ENCODE measurements at regions of chr3 and their contacts with region 1.

Region 1: GRCh38 chr3:73056014-73056844 is 5.2 kb upstream of the EBLN2 start:
- DNase-seq: no peak
- H3K4me3 Mint-ChIP-seq: no peak overlapping the region
- H3K27ac Mint-ChIP-seq: peak overlapping the region; percentile 68
- H3K4me1 Mint-ChIP-seq: peaks cover 8% of the 10 kb centered on the region
- H3K27me3 Mint-ChIP-seq: no peaks in the 10 kb centered on the region
- CTCF ChIP-seq: no peak

Region 2: GRCh38 chr3:72996473-72997333 is 59.5 kb before region 1 on chr3 and contains the start of gene PPP4R2:
- CTCF ChIA-PET with region 1: interaction called, 8 read pairs
- intact Hi-C with region 1: loop called (anchors 5 kb)
- DNase-seq: peak; percentile 91
- H3K4me3 Mint-ChIP-seq: peak within 1 kb of the TSS; percentile 96
- H3K27ac Mint-ChIP-seq: peak within 1 kb of the TSS; percentile 89
- H3K4me1 Mint-ChIP-seq: peaks cover 10% of the 10 kb centered on the region
- H3K27me3 Mint-ChIP-seq: no peaks in the 10 kb centered on the region
- CTCF ChIP-seq: no peak
- total RNA-seq, gene PPP4R2: 68.4 and 89.0 TPM in 2 replicates

Region 3: GRCh38 chr3:73024836-73025235 is 31.4 kb before region 1 on chr3:
- CTCF ChIA-PET with region 1: interaction called, 5 read pairs
- intact Hi-C with region 1: loop called (anchors 5 kb)
- DNase-seq: peak; percentile 35
- H3K4me3 Mint-ChIP-seq: no peak overlapping the region
- H3K27ac Mint-ChIP-seq: peak overlapping the region; percentile 79
- H3K4me1 Mint-ChIP-seq: peaks cover 40% of the 10 kb centered on the region
- H3K27me3 Mint-ChIP-seq: no peaks in the 10 kb centered on the region
- CTCF ChIP-seq: no peak

Region 4: GRCh38 chr3:73037369-73037699 is 18.9 kb before region 1 on chr3:
- CTCF ChIA-PET with region 1: interaction called, 3 read pairs
- intact Hi-C with region 1: loop called (anchors 2 kb)
- DNase-seq: no peak
- H3K4me3 Mint-ChIP-seq: no peak overlapping the region
- H3K27ac Mint-ChIP-seq: peak overlapping the region; percentile 56
- H3K4me1 Mint-ChIP-seq: peaks cover 45% of the 10 kb centered on the region
- H3K27me3 Mint-ChIP-seq: no peaks in the 10 kb centered on the region
- CTCF ChIP-seq: no peak

Measured in Calu3 (cell line).